ENCODE measurements at regions of chr16 and their contacts with region 1.

Region 1: DNA sequence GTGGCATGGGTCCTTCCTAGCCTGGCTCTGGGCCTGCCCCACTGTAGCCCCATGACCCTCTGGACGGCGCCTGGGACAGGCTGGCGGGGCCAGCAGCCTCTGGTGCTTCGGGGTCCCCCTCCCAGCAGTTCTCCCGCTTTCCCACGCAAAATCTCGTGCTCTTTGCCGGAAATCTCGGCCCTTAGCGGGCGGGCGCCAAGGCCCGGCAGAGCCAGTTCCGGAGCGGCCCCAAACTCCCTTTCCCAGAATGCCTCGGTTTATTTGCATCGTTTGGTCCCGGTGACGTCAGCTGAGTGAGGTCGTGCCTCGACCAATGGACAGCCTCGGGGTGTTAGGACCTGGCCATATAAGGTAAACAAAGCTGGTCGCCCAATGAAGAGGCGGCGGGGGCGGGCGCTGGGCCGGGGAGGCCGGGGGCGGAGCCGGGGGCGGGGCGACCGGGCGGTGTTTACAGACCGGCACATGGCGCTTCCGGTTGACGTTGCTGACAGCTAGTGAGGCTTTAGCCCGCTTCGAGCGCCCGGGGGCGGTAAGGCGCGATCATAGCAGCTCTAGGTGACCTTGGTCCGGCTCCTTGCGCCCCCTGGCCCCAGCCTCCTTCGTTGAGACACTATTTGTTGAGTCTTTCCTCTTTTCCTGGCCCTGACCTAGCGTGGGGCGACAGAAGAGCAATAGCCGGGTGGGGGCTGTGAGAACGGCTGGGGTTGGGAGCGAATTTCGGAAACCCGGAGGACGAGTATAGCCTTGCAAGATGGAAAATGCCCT is 1.5 kb upstream of the UBALD1 start:
- DNase-seq: peak; percentile 98
- ATAC-seq: peak; percentile 88
- H3K4me3 ChIP-seq: peak overlapping the region; percentile 67 to 79
- H3K27ac ChIP-seq: peak overlapping the region; percentile 93
- H3K4me1 ChIP-seq: peaks cover 29% of the 10 kb centered on the region
- H3K27me3 ChIP-seq: no peaks in the 10 kb centered on the region
- CTCF ChIP-seq: no peak; the same call in 1 of the 2 replicates

Region 2: GRCh38 chr16:3934491-3935181 is 681.6 kb before region 1 on chr16:
- CTCF ChIA-PET with region 1: no interaction called
- POLR2A ChIA-PET with region 1: interaction called, 11 read pairs
- in situ Hi-C with region 1: no loop called
- intact Hi-C with region 1: no loop called
- DNase-seq: peak; percentile 30
- ATAC-seq: peak; percentile 60
- H3K4me3 ChIP-seq: peak overlapping the region; percentile 2 to 29; a peak in 3 of 4 replicates
- H3K27ac ChIP-seq: peak overlapping the region; percentile 81
- H3K4me1 ChIP-seq: peaks cover 28% of the 10 kb centered on the region
- H3K27me3 ChIP-seq: no peaks in the 10 kb centered on the region
- CTCF ChIP-seq: no peak

Region 3: GRCh38 chr16:4538350-4539235 is 77.6 kb before region 1 on chr16 and contains the start of gene CDIP1:
- CTCF ChIA-PET with region 1: no interaction called
- POLR2A ChIA-PET with region 1: interaction called, 13 read pairs
- in situ Hi-C with region 1: no loop called
- intact Hi-C with region 1: no loop called
- DNase-seq: peak; percentile 88
- ATAC-seq: peak; percentile 97
- H3K4me3 ChIP-seq: peak within 1 kb of the TSS; percentile 66 to 72
- H3K27ac ChIP-seq: peak within 1 kb of the TSS; percentile 86
- H3K4me1 ChIP-seq: peaks cover 5% of the 10 kb centered on the region; the same call in 1 of the 2 replicates
- H3K27me3 ChIP-seq: no peaks in the 10 kb centered on the region
- CTCF ChIP-seq: no peak
- total RNA-seq, gene CDIP1: 26.8 TPM

Region 4: GRCh38 chr16:6483469-6484033 is 1867.3 kb after region 1 on chr16:
- CTCF ChIA-PET with region 1: no interaction called
- POLR2A ChIA-PET with region 1: no interaction called
- in situ Hi-C with region 1: no loop called
- intact Hi-C with region 1: no loop called
- DNase-seq: no peak
- ATAC-seq: no peak
- H3K4me3 ChIP-seq: no peak overlapping the region
- H3K27ac ChIP-seq: no peak overlapping the region
- H3K4me1 ChIP-seq: no peaks in the 10 kb centered on the region
- H3K27me3 ChIP-seq: no peaks in the 10 kb centered on the region; the same call in 1 of the 2 replicates
- CTCF ChIP-seq: no peak